ENCODE measurements at regions of chr11 and their contacts with region 1.

Region 1: DNA sequence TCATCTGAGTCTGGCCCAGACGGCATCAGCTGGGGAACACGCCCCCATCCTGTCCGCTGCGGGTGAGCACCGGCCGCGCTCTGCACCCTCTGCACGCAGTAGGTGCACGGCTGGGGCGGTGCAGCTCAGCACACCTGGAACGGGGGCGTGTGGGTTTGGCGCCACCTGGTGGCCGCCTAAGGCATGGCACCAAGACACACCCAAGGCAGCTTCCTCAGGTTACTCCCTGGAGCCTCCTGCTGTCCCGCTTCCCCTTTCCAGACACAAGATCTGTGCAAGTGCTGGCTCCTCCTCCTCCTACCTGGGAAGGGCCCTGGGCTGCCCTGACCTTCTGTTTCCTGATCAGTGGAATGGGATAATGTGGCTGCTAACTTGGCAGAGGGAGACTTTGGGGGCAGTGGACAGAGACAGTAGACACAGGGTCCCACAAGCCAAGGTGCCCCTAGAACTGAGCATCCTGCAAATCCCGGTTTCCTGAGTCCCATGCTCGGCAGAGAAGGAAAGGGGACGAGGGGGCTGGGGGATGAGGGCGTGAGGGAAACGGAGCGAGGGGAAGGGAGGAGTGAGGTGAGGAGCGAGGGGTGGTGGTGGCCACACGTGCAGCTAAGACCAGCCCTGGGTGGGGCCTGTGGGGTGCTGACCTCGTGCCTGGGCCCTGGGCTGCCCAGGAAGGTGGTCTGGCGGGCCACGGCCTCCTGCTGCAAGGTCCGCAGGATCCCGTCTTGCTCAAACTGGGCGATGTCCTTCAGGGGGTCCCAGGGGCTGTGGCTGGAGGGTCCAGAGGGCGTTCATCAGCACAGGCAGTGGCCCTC is 34.8 kb upstream of the CARS1 start:
- DNase-seq: peak; percentile 56 to 78 (median 68)
- H3K4me3 ChIP-seq: no peak overlapping the region
- H3K4me3 Mint-ChIP-seq: no peak overlapping the region
- H3K27ac ChIP-seq: no peak overlapping the region
- H3K27ac Mint-ChIP-seq: peak overlapping the region in 1 of 7 donors; percentile 71
- H3K4me1 ChIP-seq: peaks cover 4 to 6% of the 10 kb centered on the region in 2 donors
- H3K4me1 Mint-ChIP-seq: peaks cover 10% of the 10 kb centered on the region
- H3K27me3 ChIP-seq: no peaks in the 10 kb centered on the region
- H3K27me3 Mint-ChIP-seq: no peaks in the 10 kb centered on the region
- CTCF ChIP-seq: peak; percentile 100

Region 2: DNA sequence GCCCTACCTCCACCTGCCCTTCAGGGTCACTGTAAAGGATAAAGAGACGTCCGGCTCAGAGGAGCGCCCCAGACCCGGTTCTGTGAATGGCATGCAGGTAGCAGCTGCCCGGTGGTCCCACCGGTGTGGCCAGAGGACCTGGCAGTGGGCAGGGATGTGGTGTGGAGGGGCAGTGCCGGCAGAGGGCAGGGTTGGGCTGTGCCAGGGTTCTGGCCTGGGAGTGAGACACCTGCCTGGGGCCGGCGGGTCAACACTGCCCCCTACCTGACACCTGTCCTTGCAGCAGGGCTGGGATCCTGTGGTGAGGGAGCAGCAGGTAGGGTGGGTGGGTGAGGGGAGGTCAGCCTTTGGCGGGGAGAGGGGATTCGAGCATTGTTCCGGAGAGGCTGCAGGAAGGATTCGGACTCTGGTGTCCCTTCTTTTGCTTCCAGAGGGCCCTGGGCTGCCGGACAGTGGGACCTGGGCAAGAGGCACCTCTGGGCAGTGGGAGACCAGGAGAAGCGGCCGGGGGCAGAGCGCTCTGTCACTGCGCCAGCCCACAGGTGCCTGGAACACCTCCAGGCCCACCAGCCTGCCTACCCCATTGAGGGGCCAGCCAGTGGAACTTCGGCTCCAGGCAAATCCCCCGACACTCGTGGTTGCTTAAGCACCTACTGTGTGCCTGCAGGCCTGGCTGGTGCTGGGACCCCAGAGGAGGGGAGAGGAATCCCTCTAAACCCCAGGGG is 161.1 kb before region 1 on chr11:
- intact Hi-C with region 1: no loop called
- DNase-seq: peak; percentile 43 to 63 (median 61)
- H3K4me3 ChIP-seq: peak overlapping the region; percentile 38 to 73 (median 63)
- H3K4me3 Mint-ChIP-seq: peak overlapping the region; percentile 87 to 92
- H3K27ac ChIP-seq: peak overlapping the region; percentile 61 to 92
- H3K27ac Mint-ChIP-seq: peak overlapping the region; percentile 73 to 97 (median 96)
- H3K4me1 ChIP-seq: peaks cover 50 to 66% of the 10 kb centered on the region in 2 donors
- H3K4me1 Mint-ChIP-seq: peaks cover 41% of the 10 kb centered on the region
- H3K27me3 ChIP-seq: peaks cover 8 to 32% of the 10 kb centered on the region in 2 donors
- H3K27me3 Mint-ChIP-seq: peaks cover 32 to 53% (median 35%) of the 10 kb centered on the region in 3 donors
- CTCF ChIP-seq: peak; percentile 92

Region 3: GRCh38 chr11:2975594-2975993 is 116.4 kb before region 1 on chr11:
- intact Hi-C with region 1: loop called in 1 of 2 experiments (anchors 5 kb)
- DNase-seq: peak; percentile 33 to 54 (median 40)
- H3K4me3 ChIP-seq: no peak overlapping the region
- H3K4me3 Mint-ChIP-seq: no peak overlapping the region
- H3K27ac ChIP-seq: peak overlapping the region in 1 of 2 donors; percentile 34
- H3K27ac Mint-ChIP-seq: peak overlapping the region in 5 of 7 donors; percentile 19 to 55 (median 32)
- H3K4me1 ChIP-seq: no peaks in the 10 kb centered on the region
- H3K4me1 Mint-ChIP-seq: peaks cover 2% of the 10 kb centered on the region
- H3K27me3 ChIP-seq: no peaks in the 10 kb centered on the region
- H3K27me3 Mint-ChIP-seq: no peaks in the 10 kb centered on the region
- CTCF ChIP-seq: peak; percentile 70